Heart left ventricle (tissue), 16 donors: ENCODE measurements at regions of chr11 and their contacts with region 1.

Region 1: DNA sequence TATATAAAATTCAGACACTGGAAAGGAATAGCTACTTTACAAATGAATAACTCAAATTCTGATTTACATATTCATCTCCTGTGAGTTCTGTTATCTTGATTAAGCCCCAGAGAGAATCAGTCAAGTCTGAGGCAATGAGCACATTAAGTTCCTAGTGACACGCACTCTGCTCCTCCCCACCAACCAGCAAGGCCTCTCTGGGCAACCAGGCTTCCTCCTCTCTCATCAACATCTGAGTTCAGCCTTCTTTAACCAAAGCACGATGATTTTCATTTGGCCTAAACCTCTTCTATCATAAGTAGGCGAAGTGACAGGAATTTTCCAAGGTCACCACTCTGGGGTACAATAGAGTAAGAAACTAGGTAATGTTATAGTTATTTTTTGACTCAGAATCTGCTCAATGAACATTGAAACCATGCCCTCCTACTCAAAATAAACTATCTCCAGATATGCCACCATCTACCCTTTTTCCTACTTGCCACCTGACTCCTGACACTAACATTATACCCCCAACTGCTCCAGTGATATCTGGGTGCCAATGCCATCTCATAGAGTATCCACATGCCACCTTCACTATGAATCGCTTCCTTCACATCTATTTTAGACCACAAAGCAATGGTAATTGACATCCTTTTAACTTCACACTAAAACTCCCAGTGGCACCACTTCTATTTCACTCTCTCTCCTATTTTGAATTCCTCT is 114.8 kb downstream of the FAM76B start:
- DNase-seq: no peak
- ATAC-seq: no peak
- H3K4me3 ChIP-seq: no peak overlapping the region
- H3K27ac ChIP-seq: peak overlapping the region in 10 of 12 donors; percentile 12 to 63 (median 35)
- H3K4me1 ChIP-seq: peaks cover 0 to 25% (median 6%) of the 10 kb centered on the region in 12 donors
- H3K27me3 ChIP-seq: no peaks in the 10 kb centered on the region
- CTCF ChIP-seq: no peak
- POLR2A ChIP-seq: no peak

Region 2: GRCh38 chr11:94997437-94997836 is 677.4 kb before region 1 on chr11:
- intact Hi-C with region 1: no loop called
- DNase-seq: no peak
- ATAC-seq: no peak
- H3K4me3 ChIP-seq: no peak overlapping the region
- H3K27ac ChIP-seq: no peak overlapping the region
- H3K4me1 ChIP-seq: no peaks in the 10 kb centered on the region
- H3K27me3 ChIP-seq: no peaks in the 10 kb centered on the region
- CTCF ChIP-seq: no peak
- POLR2A ChIP-seq: no peak

Region 3: DNA sequence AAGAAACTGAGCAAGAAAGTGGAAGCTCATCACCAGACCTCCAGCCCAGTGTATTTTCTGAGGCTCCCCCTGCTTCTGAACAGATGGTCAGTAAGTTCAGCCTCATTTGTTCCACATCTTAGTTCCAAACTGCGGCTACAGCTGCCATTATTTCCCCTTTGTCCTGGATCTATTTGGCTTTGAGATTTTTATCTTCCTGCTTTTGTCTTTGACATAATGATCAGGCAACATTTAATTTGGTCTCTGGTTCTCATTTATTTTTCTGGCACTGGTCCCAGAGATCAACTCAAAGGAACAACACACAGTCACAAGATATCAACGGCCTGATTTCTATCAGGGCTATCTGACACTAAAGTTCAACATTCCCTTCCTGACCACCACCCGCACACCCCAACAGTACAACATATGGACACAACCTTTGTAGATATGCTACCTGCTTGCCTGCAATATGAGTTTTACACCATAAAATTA is 22.8 kb before region 1 on chr11:
- intact Hi-C with region 1: loop called in 1 of 10 experiments (anchors 2 kb)
- DNase-seq: peak in 2 of 5 donors; percentile 15 to 20
- ATAC-seq: peak in 3 of 4 donors; percentile 27 to 90 (median 58)
- H3K4me3 ChIP-seq: no peak overlapping the region
- H3K27ac ChIP-seq: peak overlapping the region in 6 of 12 donors; percentile 4 to 51 (median 16)
- H3K4me1 ChIP-seq: peaks cover 0 to 36% (median 4%) of the 10 kb centered on the region in 12 donors
- H3K27me3 ChIP-seq: no peaks in the 10 kb centered on the region
- CTCF ChIP-seq: no peak
- POLR2A ChIP-seq: no peak